H1 (cell line): ENCODE measurements at regions of chr13 and their contacts with region 1.

Region 1: DNA sequence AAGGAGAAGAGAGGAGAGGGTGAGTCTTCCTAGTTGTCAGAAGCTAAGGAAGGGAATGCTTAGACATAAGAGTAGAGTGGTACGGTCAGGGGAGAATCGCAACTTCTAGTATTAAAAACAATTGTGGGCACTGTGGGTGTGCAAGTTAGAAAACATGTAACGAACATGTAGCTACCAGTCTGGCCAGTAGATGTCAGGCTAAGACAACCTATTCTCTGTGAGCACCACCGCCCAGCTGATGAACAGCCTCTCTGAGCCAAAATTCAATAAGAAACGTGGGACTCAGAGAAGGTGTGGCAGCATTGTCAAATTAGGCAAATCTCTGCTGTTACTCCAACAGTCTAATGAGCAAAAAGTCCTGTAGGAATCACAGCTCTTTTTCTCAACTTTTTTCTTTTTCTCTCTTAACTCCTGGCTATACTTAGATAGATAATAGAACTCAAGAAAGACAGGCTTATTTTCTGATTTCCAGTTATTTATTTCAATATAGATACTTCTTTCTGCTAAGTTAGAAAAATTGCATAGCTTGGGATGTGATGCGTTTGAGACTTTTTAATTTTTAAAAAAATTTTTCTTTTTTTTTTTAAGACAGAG is 186.2 kb downstream of the USP12 start:
- DNase-seq: peak in 1 of 2 experiments; percentile 71
- H3K4me3 ChIP-seq: no peak overlapping the region
- H3K27ac ChIP-seq: no peak overlapping the region
- H3K4me1 ChIP-seq: no peaks in the 10 kb centered on the region
- H3K27me3 ChIP-seq: no peaks in the 10 kb centered on the region
- CTCF ChIP-seq: peak; percentile 21 to 87 (median 82)
- EP300 ChIP-seq: no peak
- POLR2A ChIP-seq: no peak
- RAD21 ChIP-seq: peak; percentile 98

Region 2: DNA sequence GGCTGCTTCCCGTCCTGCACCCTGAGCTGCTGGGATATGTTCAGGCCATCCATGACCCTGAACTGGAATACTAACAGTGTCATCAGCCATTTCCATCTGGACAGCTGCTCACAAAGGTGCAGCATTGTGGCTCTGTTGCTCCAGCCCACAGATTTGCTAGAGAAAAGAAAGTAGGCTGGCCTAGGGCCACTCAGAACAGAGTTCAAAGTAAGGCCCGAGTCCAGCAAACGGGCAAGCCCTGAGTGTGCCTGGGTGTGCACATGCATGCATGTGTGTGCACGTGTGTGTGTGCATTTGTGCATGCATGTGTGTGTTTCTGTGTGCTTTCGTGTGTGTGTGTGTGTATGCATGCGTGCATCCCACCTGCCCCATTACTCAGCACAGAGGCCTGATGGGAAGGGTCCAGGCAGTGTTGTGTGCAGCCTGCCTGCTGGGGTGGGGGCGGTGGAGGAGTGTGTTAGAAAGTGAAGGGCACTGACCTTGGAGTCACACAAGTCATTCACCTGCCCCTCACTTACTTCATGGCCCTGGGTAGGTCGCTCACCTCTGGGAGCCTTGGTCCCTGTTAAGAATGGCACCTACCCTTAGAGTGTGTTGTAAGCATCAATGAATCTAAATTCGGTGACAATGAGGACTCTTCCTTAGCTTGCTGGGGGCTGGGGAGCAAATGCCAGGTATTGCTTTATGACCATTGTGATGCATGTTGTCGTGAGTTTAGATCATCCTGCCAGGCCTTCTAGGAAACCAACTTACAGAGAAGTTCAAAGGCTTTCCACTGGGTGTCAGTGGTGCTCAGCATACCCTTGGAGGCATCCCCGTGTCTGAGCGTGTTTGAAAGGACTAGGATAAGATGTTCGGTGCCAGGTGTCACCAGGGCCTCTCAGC is 278.0 kb before region 1 on chr13:
- CTCF ChIA-PET with region 1: no interaction called
- POLR2A ChIA-PET with region 1: no interaction called
- DNase-seq: peak in 1 of 2 experiments; percentile 41
- H3K4me3 ChIP-seq: no peak overlapping the region
- H3K27ac ChIP-seq: no peak overlapping the region
- H3K4me1 ChIP-seq: peaks cover 1 to 10% (median 4%) of the 10 kb centered on the region in 4 experiments; a peak in 5 of 7 replicates
- H3K27me3 ChIP-seq: no peaks in the 10 kb centered on the region
- CTCF ChIP-seq: peak; percentile 41 to 92 (median 81)
- EP300 ChIP-seq: no peak
- POLR2A ChIP-seq: no peak
- RAD21 ChIP-seq: peak; percentile 96 to 97

Region 3: DNA sequence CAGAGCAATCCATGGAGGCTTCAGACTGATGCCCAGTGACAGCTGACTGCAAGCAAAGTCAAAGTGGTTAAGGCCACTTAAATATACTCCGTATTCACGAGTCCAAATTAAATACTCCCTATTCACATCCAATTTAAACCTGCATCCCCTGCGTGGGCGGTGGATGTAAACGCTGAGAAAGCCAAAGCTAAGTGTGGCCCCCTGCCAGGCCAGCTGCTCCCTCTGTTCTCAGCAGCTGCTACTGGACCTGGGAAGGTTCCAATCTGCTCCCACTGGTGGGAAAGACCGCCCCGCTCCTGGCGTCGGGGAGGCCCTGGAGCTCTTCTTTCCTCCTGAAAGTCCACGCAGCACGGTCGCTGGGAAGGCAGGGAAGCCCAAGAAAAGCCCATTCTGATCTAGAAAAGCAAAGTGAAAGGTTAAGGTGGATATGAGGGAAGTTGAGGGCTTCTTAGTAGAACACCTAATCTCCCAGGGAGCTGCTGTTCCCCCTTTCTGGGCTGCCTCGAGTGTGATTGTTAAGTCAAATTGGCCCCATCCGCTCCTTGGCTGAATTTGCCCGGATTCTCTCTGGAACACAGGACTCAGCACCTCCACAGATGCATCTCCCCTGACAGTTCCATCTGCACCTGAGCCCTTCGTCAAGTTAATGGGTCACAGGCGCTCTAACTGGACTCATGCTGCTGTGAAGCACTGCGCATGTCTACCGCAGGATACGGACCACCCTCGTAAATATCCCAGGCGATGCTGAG is 19.3 kb before region 1 on chr13:
- CTCF ChIA-PET with region 1: interaction called, 17 read pairs
- POLR2A ChIA-PET with region 1: no interaction called
- DNase-seq: no peak
- H3K4me3 ChIP-seq: no peak overlapping the region
- H3K27ac ChIP-seq: no peak overlapping the region
- H3K4me1 ChIP-seq: peaks cover 0 to 7% (median 3%) of the 10 kb centered on the region in 4 experiments; a peak in 5 of 7 replicates
- H3K27me3 ChIP-seq: no peaks in the 10 kb centered on the region; a peak in 1 of 7 replicates
- CTCF ChIP-seq: no peak
- EP300 ChIP-seq: no peak
- POLR2A ChIP-seq: no peak
- RAD21 ChIP-seq: no peak

Region 4: DNA sequence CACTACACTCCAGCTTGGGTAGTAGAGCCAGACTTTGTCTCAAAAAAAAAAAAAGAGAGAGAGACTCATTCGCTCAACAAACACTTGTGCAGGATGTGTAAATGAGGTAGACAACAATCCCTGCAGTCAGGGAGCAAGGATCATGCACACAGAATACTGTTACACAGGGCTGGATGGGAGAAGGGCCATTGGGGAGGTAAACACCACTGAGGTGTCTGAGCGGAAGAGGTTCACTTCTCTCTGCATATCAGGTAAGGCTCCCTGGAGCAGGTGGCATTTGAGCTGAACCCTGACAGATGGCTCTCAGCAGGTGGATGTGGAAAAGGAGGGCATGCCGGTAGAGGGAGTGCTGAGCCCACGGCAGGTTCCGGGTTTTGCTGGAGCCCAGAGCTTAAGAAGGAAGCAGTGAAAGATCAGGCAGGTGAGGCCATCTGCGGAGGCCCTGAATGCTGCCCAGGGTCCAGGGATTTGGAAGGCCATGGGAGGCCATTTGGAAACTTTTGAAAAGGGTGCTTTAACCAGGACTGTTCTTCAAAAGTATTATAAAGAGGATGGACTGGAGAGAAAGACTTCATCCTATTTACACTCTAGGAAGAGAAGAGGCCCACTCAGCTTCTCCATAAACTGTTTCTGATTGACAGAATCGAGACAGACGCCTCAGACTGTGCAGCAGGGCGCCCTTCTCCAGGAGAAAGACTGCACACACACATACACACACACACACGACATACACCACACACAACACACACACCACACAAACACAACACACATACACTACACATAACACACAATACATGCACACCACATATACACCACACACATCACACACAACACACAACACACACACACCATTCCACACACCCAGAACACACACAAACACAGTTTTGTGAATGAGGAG is 13.1 kb before region 1 on chr13:
- CTCF ChIA-PET with region 1: interaction called, 17 read pairs
- POLR2A ChIA-PET with region 1: no interaction called
- DNase-seq: peak; percentile 15 to 70
- H3K4me3 ChIP-seq: no peak overlapping the region
- H3K27ac ChIP-seq: no peak overlapping the region
- H3K4me1 ChIP-seq: no peaks in the 10 kb centered on the region; a peak in 3 of 7 replicates
- H3K27me3 ChIP-seq: no peaks in the 10 kb centered on the region; a peak in 1 of 7 replicates
- CTCF ChIP-seq: peak; percentile 60 to 76 (median 74)
- EP300 ChIP-seq: no peak
- POLR2A ChIP-seq: no peak
- RAD21 ChIP-seq: peak; percentile 70 to 79

Region 5: GRCh38 chr13:27266917-27267316 is 281.5 kb after region 1 on chr13:
- CTCF ChIA-PET with region 1: no interaction called
- POLR2A ChIA-PET with region 1: no interaction called
- DNase-seq: no peak
- H3K4me3 ChIP-seq: no peak overlapping the region
- H3K27ac ChIP-seq: no peak overlapping the region
- H3K4me1 ChIP-seq: peaks cover 0 to 3% (median 0%) of the 10 kb centered on the region in 4 experiments; a peak in 1 of 7 replicates
- H3K27me3 ChIP-seq: peaks cover 0 to 14% (median 10%) of the 10 kb centered on the region in 4 experiments; a peak in 6 of 7 replicates
- CTCF ChIP-seq: no peak
- EP300 ChIP-seq: no peak
- POLR2A ChIP-seq: no peak
- RAD21 ChIP-seq: no peak

Region 6: DNA sequence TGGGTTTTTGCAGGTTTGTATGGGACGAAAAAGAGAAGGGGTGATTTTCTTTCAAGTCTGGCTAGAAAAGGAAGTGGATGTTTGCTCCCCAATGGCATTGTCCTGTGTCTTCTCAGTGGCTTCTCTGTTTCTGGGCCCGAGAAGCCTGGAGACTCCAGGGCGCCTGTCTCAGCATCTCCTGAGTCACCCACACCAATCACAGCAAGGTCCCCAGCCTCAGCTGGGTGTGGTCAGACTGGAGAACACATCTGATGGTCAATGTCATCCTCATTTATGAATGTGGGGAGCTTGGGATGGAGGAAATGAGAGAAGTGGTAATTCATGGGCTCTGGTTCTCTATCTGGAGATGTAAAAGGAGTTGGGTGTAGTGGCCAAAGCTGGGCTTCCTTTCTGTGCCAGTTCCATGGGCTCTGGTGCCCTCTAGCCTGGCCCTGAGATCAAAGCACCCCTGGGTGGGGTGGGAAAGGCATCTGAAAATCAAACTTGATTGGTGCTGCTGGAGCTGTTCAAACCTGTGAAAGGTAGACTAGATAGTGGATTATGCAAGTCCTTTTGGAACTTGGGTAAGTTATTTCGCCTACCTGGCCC is 298.6 kb after region 1 on chr13:
- CTCF ChIA-PET with region 1: interaction called, 10 read pairs
- POLR2A ChIA-PET with region 1: no interaction called
- DNase-seq: no peak
- H3K4me3 ChIP-seq: no peak overlapping the region
- H3K27ac ChIP-seq: no peak overlapping the region
- H3K4me1 ChIP-seq: no peaks in the 10 kb centered on the region
- H3K27me3 ChIP-seq: no peaks in the 10 kb centered on the region
- CTCF ChIP-seq: peak in 2 of 3 experiments; percentile 25 to 28; a peak in 2 of 4 replicates
- EP300 ChIP-seq: no peak
- POLR2A ChIP-seq: no peak
- RAD21 ChIP-seq: peak; percentile 65 to 69

Region 7: GRCh38 chr13:27353166-27353583 is 367.8 kb after region 1 on chr13:
- CTCF ChIA-PET with region 1: interaction called, 164 read pairs
- POLR2A ChIA-PET with region 1: interaction called, 4 read pairs
- DNase-seq: no peak
- H3K4me3 ChIP-seq: no peak overlapping the region
- H3K27ac ChIP-seq: no peak overlapping the region
- H3K4me1 ChIP-seq: peaks cover 2 to 7% (median 5%) of the 10 kb centered on the region in 4 experiments; a peak in 5 of 7 replicates
- H3K27me3 ChIP-seq: no peaks in the 10 kb centered on the region
- CTCF ChIP-seq: no peak
- EP300 ChIP-seq: no peak
- POLR2A ChIP-seq: no peak
- RAD21 ChIP-seq: no peak